ENCODE measurements at regions of chr14 and their contacts with region 1.

Region 1: DNA sequence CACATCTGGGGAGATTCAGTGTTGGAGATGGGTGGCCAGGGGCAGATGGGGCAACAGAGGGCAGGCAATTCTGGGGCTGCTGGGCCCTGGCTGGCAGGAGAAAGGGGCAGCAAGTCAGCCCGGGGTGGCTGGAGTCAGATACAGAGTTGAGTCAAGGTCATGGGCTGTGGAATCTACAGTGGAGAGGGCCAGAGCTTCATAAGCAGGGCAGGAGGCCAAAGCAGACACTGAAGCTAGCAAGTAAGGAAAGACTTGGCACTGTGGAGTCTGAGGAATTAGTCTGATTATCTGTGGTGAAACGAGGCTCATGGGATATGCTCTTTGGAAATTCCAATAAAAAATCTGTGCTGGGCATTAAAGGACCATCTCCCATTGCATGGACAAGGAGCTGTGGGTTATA is 95.5 kb downstream of the TMX1 start:
- DNase-seq: peak; percentile 84
- H3K4me3 ChIP-seq: no peak overlapping the region
- H3K27ac ChIP-seq: peak overlapping the region; percentile 61 to 81 (median 63)
- H3K4me1 ChIP-seq: peaks cover 0 to 57% (median 47%) of the 10 kb centered on the region in 4 donors
- H3K27me3 ChIP-seq: no peaks in the 10 kb centered on the region
- CTCF ChIP-seq: no peak
- EP300 ChIP-seq: no peak
- POLR2A ChIP-seq: no peak

Region 2: DNA sequence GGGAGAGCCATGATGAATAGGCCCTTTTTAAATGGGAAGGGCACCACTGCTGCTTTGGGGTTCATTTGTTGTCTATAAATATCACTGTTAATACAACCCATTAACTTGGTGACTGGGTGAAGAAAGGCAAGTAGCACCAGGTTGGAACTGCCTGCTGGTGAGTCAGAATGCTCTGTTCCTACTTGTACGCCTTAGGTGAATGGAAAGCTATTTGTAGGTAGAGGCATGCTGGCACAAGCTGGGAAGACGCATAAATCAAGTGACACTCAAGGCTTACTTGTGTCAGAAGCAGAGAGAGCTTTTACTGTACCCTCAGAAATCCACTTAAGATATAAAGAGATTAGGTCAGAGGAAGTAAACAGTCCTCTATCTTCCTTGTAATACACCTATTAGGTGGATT is 47.0 kb after region 1 on chr14:
- intact Hi-C with region 1: no loop called
- DNase-seq: no peak
- H3K4me3 ChIP-seq: no peak overlapping the region
- H3K27ac ChIP-seq: no peak overlapping the region
- H3K4me1 ChIP-seq: peaks cover 0 to 6% (median 0%) of the 10 kb centered on the region in 4 donors
- H3K27me3 ChIP-seq: no peaks in the 10 kb centered on the region
- CTCF ChIP-seq: no peak
- EP300 ChIP-seq: no peak
- POLR2A ChIP-seq: no peak

Region 3: DNA sequence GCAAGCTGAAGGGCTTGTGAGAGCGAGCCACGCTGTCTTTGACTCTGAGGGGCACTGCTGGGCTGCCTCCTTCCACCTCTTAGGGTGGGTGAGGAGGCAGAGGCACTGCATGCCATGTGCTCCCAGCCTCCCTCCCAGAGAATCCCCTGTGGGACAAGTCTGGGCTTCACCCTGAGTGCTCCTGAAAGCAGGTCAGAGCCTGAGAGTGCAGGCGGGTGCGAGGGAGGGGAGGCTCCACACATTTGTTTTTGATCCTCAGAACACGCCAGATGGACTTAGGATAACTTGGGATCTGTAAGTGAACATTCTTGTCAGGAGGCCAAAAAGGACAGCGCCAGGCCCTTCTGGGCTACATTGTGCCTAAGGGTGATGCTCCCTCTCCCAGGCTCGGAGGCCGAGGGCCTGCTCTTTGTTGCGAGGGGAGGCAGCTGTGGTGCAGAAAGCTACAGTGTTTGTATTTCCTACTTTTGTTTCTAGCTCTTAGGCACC is 59.9 kb after region 1 on chr14:
- intact Hi-C with region 1: loop called (anchors 5 kb)
- DNase-seq: peak; percentile 82
- H3K4me3 ChIP-seq: no peak overlapping the region
- H3K27ac ChIP-seq: peak overlapping the region; percentile 71 to 83 (median 80)
- H3K4me1 ChIP-seq: peaks cover 0 to 47% (median 41%) of the 10 kb centered on the region in 4 donors
- H3K27me3 ChIP-seq: no peaks in the 10 kb centered on the region
- CTCF ChIP-seq: no peak
- EP300 ChIP-seq: no peak
- POLR2A ChIP-seq: no peak

Region 4: GRCh38 chr14:51479584-51480325 is 144.2 kb after region 1 on chr14:
- intact Hi-C with region 1: loop called (anchors 10 kb)
- DNase-seq: peak; percentile 73
- H3K4me3 ChIP-seq: no peak overlapping the region
- H3K27ac ChIP-seq: no peak overlapping the region
- H3K4me1 ChIP-seq: peaks cover 0 to 14% (median 0%) of the 10 kb centered on the region in 4 donors
- H3K27me3 ChIP-seq: no peaks in the 10 kb centered on the region
- CTCF ChIP-seq: no peak
- EP300 ChIP-seq: no peak
- POLR2A ChIP-seq: no peak

Measured in sigmoid colon (tissue), 7 donors.